CD4-positive, alpha-beta memory T cell (primary cell): ENCODE measurements at regions of chr16 and their contacts with region 1.

Region 1: DNA sequence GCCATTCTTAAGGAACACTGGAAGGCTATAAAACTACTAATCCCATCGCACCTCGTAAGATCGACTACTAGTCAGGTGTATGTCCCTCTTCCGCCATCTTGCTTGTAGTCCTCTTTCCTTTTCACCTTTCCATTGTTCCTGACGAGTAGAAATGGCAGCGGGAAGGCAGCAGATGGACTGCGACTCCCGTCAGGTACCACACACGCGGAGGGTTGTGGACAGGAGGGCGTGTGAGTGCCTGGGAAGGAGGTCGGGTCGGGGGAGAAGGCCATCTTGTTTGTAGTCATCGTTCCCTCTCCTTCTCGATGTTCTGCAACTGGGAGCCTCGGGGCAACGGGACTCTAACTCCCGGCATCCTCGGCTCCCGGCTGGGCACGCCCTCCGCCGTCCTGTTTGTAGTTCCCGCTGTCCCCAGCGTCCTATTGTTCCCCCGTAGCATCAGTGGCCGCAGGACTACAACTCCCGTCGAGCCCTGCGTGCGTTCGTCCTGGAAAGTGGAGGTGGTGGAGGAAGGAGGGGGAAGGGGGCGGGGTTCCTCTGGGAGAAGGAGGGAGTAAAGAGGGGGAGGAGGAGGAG is 324 bp upstream of the FBXL19 start:
- DNase-seq: peak; percentile 95 to 98 (median 97)
- H3K4me3 ChIP-seq: peak overlapping the region; percentile 73 to 92
- H3K4me3 Mint-ChIP-seq: peak overlapping the region; percentile 95 to 100 (median 99)
- H3K27ac ChIP-seq: peak overlapping the region; percentile 90
- H3K27ac Mint-ChIP-seq: peak overlapping the region; percentile 98 to 100 (median 99)
- H3K4me1 ChIP-seq: peaks cover 12% of the 10 kb centered on the region
- H3K4me1 Mint-ChIP-seq: peaks cover 7 to 33% (median 17%) of the 10 kb centered on the region in 4 donors
- H3K27me3 ChIP-seq: no peaks in the 10 kb centered on the region
- H3K27me3 Mint-ChIP-seq: no peaks in the 10 kb centered on the region

Region 2: GRCh38 chr16:30747799-30748634 is 175.0 kb before region 1 on chr16 and contains the start of gene PHKG2:
- CTCF ChIA-PET with region 1: no interaction called
- POLR2A ChIA-PET with region 1: no interaction called
- intact Hi-C with region 1: loop called (anchors 1 kb)
- DNase-seq: peak; percentile 94 to 96 (median 95)
- H3K4me3 ChIP-seq: peak within 1 kb of the TSS; percentile 65 to 71
- H3K4me3 Mint-ChIP-seq: peak within 1 kb of the TSS; percentile 89 to 97 (median 91)
- H3K27ac ChIP-seq: peak within 1 kb of the TSS; percentile 60
- H3K27ac Mint-ChIP-seq: peak within 1 kb of the TSS; percentile 73 to 94 (median 89)
- H3K4me1 ChIP-seq: peaks cover 7% of the 10 kb centered on the region
- H3K4me1 Mint-ChIP-seq: peaks cover 14 to 33% (median 20%) of the 10 kb centered on the region in 4 donors
- H3K27me3 ChIP-seq: no peaks in the 10 kb centered on the region
- H3K27me3 Mint-ChIP-seq: no peaks in the 10 kb centered on the region
- total RNA-seq, gene PHKG2: 54.1 to 54.9 TPM

Region 3: DNA sequence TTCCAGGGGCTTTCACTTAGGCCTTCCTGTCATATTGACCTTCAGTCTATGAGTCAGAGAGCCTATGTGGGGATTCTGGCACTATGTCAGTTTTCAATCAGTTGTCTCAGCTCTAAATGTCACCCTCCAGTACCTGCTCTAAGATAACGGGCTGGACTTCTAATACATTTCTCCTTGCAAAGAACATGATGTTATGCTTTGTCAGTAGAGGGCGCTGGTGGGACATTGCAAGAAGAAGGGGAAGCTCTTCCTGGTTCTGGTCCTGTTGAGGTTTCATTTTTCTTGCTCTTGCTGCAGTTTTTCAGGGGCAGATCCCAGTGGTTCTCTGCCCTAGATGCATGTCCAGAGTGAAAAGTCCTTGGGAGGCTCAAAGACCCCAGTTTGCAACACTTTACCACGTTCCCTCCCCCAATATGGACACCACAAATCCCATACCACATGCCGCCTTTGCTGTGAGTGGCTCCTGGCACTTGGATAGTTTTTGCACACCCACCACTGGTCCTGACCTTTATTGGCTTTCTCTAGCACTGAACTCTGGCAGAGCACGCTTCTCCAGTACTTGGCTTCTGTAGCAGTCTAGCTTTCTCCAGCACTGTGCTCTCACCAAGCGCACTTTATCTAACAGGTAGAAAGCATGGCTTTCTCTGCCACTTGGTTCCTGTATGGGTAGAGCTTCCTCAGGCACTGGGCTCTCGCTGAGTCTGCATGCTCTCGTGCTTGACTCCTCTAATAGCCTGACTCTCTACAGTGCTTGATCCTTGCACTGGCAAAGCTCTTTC is 78.2 kb before region 1 on chr16:
- CTCF ChIA-PET with region 1: interaction called, 80 read pairs
- POLR2A ChIA-PET with region 1: interaction called, 18 read pairs
- intact Hi-C with region 1: no loop called
- DNase-seq: peak; percentile 82 to 88 (median 85)
- H3K4me3 ChIP-seq: peak overlapping the region in 1 of 2 donors; percentile 0
- H3K4me3 Mint-ChIP-seq: peak overlapping the region; percentile 31 to 72 (median 58)
- H3K27ac ChIP-seq: no peak overlapping the region
- H3K27ac Mint-ChIP-seq: peak overlapping the region in 6 of 7 donors; percentile 6 to 81 (median 74)
- H3K4me1 ChIP-seq: peaks cover 6% of the 10 kb centered on the region
- H3K4me1 Mint-ChIP-seq: peaks cover 6 to 11% (median 10%) of the 10 kb centered on the region in 4 donors
- H3K27me3 ChIP-seq: no peaks in the 10 kb centered on the region
- H3K27me3 Mint-ChIP-seq: no peaks in the 10 kb centered on the region

Region 4: DNA sequence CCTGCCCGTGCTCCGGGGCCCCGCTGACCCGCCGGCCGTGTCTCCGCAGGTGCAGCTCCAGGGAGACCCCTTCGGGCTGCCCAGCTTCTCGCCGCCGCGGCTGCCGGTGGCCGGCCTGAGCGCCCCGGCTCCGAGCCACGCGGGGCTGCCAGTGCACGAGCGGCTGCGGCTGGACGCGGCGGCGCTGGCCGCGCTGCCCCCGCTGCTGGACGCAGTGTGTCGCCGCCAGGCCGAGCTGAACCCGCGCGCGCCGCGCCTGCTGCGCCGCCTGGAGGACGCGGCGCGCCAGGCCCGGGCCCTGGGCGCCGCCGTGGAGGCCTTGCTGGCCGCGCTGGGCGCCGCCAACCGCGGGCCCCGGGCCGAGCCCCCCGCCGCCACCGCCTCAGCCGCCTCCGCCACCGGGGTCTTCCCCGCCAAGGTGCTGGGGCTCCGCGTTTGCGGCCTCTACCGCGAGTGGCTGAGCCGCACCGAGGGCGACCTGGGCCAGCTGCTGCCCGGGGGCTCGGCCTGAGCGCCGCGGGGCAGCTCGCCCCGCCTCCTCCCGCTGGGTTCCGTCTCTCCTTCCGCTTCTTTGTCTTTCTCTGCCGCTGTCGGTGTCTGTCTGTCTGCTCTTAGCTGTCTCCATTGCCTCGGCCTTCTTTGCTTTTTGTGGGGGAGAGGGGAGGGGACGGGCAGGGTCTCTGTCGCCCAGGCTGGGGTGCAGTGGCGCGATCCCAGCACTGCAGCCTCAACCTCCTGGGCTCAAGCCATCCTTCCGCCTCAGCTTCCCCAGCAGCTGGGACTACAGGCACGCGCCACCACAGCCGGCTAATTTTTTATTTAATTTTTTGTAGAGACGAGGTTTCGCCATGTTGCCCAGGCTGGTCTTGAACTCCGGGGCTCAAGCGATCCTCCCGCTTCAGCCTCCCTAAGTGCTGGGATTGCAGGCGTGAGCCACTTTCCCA is 20.7 kb before region 1 on chr16:
- CTCF ChIA-PET with region 1: interaction called, 7 read pairs
- POLR2A ChIA-PET with region 1: interaction called, 15 read pairs
- intact Hi-C with region 1: loop called (anchors 1 kb)
- DNase-seq: peak; percentile 54 to 72 (median 58)
- H3K4me3 ChIP-seq: peak overlapping the region in 1 of 2 donors; percentile 68
- H3K4me3 Mint-ChIP-seq: peak overlapping the region; percentile 94 to 99 (median 96)
- H3K27ac ChIP-seq: peak overlapping the region; percentile 70
- H3K27ac Mint-ChIP-seq: peak overlapping the region; percentile 91 to 99 (median 98)
- H3K4me1 ChIP-seq: peaks cover 41% of the 10 kb centered on the region
- H3K4me1 Mint-ChIP-seq: peaks cover 19 to 47% (median 32%) of the 10 kb centered on the region in 4 donors
- H3K27me3 ChIP-seq: no peaks in the 10 kb centered on the region
- H3K27me3 Mint-ChIP-seq: no peaks in the 10 kb centered on the region

Region 5: GRCh38 chr16:31032736-31033708 is 110.0 kb after region 1 on chr16 and contains the start of gene STX4:
- CTCF ChIA-PET with region 1: no interaction called
- POLR2A ChIA-PET with region 1: no interaction called
- intact Hi-C with region 1: loop called (anchors 1 kb)
- DNase-seq: peak; percentile 95 to 100 (median 98)
- H3K4me3 ChIP-seq: peak within 1 kb of the TSS; percentile 83 to 97
- H3K4me3 Mint-ChIP-seq: peak within 1 kb of the TSS; percentile 91 to 98 (median 95)
- H3K27ac ChIP-seq: peak within 1 kb of the TSS; percentile 86
- H3K27ac Mint-ChIP-seq: peak within 1 kb of the TSS; percentile 93 to 98 (median 98)
- H3K4me1 ChIP-seq: peaks cover 24% of the 10 kb centered on the region
- H3K4me1 Mint-ChIP-seq: peaks cover 6 to 38% (median 22%) of the 10 kb centered on the region in 4 donors
- H3K27me3 ChIP-seq: no peaks in the 10 kb centered on the region
- H3K27me3 Mint-ChIP-seq: no peaks in the 10 kb centered on the region
- total RNA-seq, gene STX4: 106 to 111 TPM

Region 6: GRCh38 chr16:31496670-31497069 is 573.6 kb after region 1 on chr16:
- CTCF ChIA-PET with region 1: no interaction called
- POLR2A ChIA-PET with region 1: no interaction called
- intact Hi-C with region 1: no loop called
- DNase-seq: no peak
- H3K4me3 ChIP-seq: no peak overlapping the region
- H3K4me3 Mint-ChIP-seq: no peak overlapping the region
- H3K27ac ChIP-seq: no peak overlapping the region
- H3K27ac Mint-ChIP-seq: no peak overlapping the region
- H3K4me1 ChIP-seq: no peaks in the 10 kb centered on the region
- H3K4me1 Mint-ChIP-seq: peaks cover 0 to 4% (median under 1%) of the 10 kb centered on the region in 4 donors
- H3K27me3 ChIP-seq: no peaks in the 10 kb centered on the region
- H3K27me3 Mint-ChIP-seq: no peaks in the 10 kb centered on the region